Transverse colon (tissue), 4 donors: ENCODE measurements at regions of chr3 and their contacts with region 1.

Region 1: GRCh38 chr3:113575206-113575605 is 42.9 kb downstream of the SIDT1 start:
- DNase-seq: peak; percentile 22
- H3K4me3 ChIP-seq: no peak overlapping the region
- H3K27ac ChIP-seq: peak overlapping the region; percentile 61 to 80 (median 69)
- H3K4me1 ChIP-seq: peaks cover 0 to 36% (median 12%) of the 10 kb centered on the region in 4 donors
- H3K27me3 ChIP-seq: no peaks in the 10 kb centered on the region
- CTCF ChIP-seq: no peak
- EP300 ChIP-seq: no peak
- POLR2A ChIP-seq: no peak

Region 2: DNA sequence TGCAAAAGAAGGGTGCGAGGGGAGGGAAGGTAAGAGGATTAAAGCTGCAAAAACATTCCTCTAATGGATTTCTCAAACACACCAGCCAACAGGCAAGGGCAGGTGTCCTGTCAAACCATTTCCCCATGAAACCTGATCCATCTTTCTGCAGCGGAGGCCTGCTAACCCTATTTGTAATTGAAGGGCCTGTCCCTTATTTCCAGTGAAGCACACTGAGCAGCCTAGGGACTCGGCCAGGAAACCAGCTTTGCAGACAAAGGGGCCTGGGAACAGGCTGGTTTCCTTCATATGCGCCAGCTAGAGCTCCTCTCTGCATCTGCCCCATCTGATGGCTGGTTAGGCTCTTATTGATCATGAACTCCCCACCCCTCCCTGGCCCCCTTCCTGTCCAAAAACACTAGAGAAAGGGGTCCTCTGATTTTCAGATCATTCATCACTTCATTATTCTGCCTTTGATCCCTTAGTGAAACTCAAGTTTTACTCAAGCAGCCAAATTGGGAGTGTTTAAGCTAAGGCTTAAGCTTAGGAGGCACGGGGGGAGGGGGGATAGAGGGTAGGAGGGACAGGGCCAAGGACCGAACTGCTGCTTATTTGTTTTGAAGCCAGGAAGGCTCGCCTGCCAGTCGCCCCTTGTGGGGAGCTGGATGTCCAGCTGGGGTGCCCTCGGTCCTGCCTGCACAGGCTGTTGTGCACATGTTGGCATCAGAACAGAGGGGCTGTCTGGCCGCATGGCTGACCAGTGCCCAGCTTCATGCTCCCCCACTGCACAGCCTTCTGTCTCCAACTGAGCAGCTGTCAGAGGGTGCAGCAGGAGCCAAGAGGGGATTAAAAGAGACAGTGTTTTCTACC is 310.7 kb before region 1 on chr3:
- in situ Hi-C with region 1: no loop called
- intact Hi-C with region 1: no loop called
- DNase-seq: no peak
- H3K4me3 ChIP-seq: no peak overlapping the region
- H3K27ac ChIP-seq: peak overlapping the region in 1 of 4 donors; percentile 32
- H3K4me1 ChIP-seq: peaks cover 0 to 7% (median 2%) of the 10 kb centered on the region in 4 donors
- H3K27me3 ChIP-seq: no peaks in the 10 kb centered on the region
- CTCF ChIP-seq: no peak
- EP300 ChIP-seq: no peak
- POLR2A ChIP-seq: no peak

Region 3: GRCh38 chr3:113495035-113495434 is 80.2 kb before region 1 on chr3:
- in situ Hi-C with region 1: loop called in 2 of 4 experiments (anchors 10 kb)
- intact Hi-C with region 1: no loop called
- DNase-seq: peak; percentile 31
- H3K4me3 ChIP-seq: no peak overlapping the region
- H3K27ac ChIP-seq: peak overlapping the region in 1 of 4 donors; percentile 3
- H3K4me1 ChIP-seq: no peaks in the 10 kb centered on the region
- H3K27me3 ChIP-seq: no peaks in the 10 kb centered on the region
- CTCF ChIP-seq: peak; percentile 32 to 55 (median 45)
- EP300 ChIP-seq: no peak
- POLR2A ChIP-seq: no peak

Region 4: DNA sequence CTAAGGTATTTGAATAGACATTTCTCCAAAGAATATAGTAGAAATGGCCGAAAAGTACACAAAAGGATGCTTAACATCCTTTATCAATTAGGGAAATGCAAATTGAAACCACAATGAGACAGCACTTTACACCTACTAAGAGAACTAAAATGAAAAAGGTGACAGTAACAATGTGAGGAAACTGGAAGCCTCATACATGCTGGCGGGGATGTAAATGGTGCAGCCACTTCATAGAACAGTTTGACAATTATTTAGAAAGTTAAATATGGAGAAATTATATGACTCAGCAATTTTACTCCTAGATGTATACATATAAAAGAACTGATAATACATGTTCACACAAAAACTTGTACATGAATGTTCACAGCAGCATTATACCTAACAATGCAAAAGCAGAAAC is 73.6 kb before region 1 on chr3:
- in situ Hi-C with region 1: loop called in 2 of 4 experiments (anchors 10 kb)
- intact Hi-C with region 1: no loop called
- DNase-seq: no peak
- H3K4me3 ChIP-seq: no peak overlapping the region
- H3K27ac ChIP-seq: no peak overlapping the region
- H3K4me1 ChIP-seq: no peaks in the 10 kb centered on the region
- H3K27me3 ChIP-seq: no peaks in the 10 kb centered on the region
- CTCF ChIP-seq: no peak
- EP300 ChIP-seq: no peak
- POLR2A ChIP-seq: no peak